ENCODE measurements at regions of chr18 and their contacts with region 1.

Region 1: GRCh38 chr18:58842978-58843687 is 21.5 kb upstream of the ZNF532 start:
- DNase-seq: peak; percentile 86 to 92
- ATAC-seq: peak; percentile 97 to 98
- H3K4me3 ChIP-seq: no peak overlapping the region
- H3K27ac ChIP-seq: peak overlapping the region; percentile 78 to 89 (median 84)
- H3K4me1 ChIP-seq: peaks cover 8 to 24% of the 10 kb centered on the region in 2 donors
- H3K27me3 ChIP-seq: no peaks in the 10 kb centered on the region
- CTCF ChIP-seq: no peak
- POLR2A ChIP-seq: no peak

Region 2: GRCh38 chr18:58792086-58792485 is 51.0 kb before region 1 on chr18:
- in situ Hi-C with region 1: no loop called
- intact Hi-C with region 1: loop called (anchors 5 kb)
- DNase-seq: no peak
- ATAC-seq: no peak
- H3K4me3 ChIP-seq: no peak overlapping the region
- H3K27ac ChIP-seq: peak overlapping the region in 3 of 4 donors; percentile 38 to 78 (median 68)
- H3K4me1 ChIP-seq: peaks cover 8 to 19% of the 10 kb centered on the region in 2 donors
- H3K27me3 ChIP-seq: no peaks in the 10 kb centered on the region
- CTCF ChIP-seq: no peak
- POLR2A ChIP-seq: no peak